HCT116 (cell line): ENCODE measurements at regions of chr12 and their contacts with region 1.

Region 1: GRCh38 chr12:85273381-85274314 is 6.4 kb upstream of the ALX1 start:
- DNase-seq: no peak
- ATAC-seq: no peak
- H3K4me3 ChIP-seq: no peak overlapping the region
- H3K27ac ChIP-seq: no peak overlapping the region
- H3K4me1 ChIP-seq: no peaks in the 10 kb centered on the region
- H3K27me3 ChIP-seq: no peaks in the 10 kb centered on the region
- CTCF ChIP-seq: no peak
- POLR2A ChIP-seq: no peak
- RAD21 ChIP-seq: no peak

Region 2: GRCh38 chr12:85225501-85225900 is 48.1 kb before region 1 on chr12:
- CTCF ChIA-PET with region 1: no interaction called
- POLR2A ChIA-PET with region 1: no interaction called
- RAD21 ChIA-PET with region 1: no interaction called
- intact Hi-C with region 1: no loop called
- DNase-seq: no peak
- ATAC-seq: no peak
- H3K4me3 ChIP-seq: no peak overlapping the region
- H3K27ac ChIP-seq: no peak overlapping the region
- H3K4me1 ChIP-seq: no peaks in the 10 kb centered on the region
- H3K27me3 ChIP-seq: no peaks in the 10 kb centered on the region
- CTCF ChIP-seq: no peak
- POLR2A ChIP-seq: no peak
- RAD21 ChIP-seq: no peak

Region 3: GRCh38 chr12:85253823-85254222 is 19.8 kb before region 1 on chr12:
- CTCF ChIA-PET with region 1: no interaction called
- POLR2A ChIA-PET with region 1: no interaction called
- RAD21 ChIA-PET with region 1: no interaction called
- intact Hi-C with region 1: loop called (anchors 1 kb)
- DNase-seq: no peak
- ATAC-seq: no peak
- H3K4me3 ChIP-seq: no peak overlapping the region
- H3K27ac ChIP-seq: no peak overlapping the region
- H3K4me1 ChIP-seq: no peaks in the 10 kb centered on the region
- H3K27me3 ChIP-seq: no peaks in the 10 kb centered on the region
- CTCF ChIP-seq: no peak
- POLR2A ChIP-seq: no peak
- RAD21 ChIP-seq: no peak

Region 4: DNA sequence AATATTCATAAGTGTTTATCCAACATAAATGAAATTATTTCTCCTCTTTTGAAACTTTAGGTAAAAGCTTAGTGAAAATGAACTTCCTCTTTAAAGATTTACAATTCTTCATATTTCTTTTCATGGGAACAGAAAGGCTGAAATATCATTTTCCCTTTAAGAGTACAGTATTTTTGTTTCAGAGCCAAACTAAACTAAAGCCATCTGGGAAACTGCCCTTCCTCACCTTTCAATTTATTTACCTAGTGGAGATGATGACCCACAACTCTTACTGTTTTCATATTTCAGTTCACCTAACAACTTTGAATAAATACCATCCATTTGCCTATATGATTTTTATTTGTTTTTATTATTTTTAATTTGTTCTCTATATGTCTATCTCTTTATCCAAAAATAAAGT is 111.8 kb after region 1 on chr12:
- CTCF ChIA-PET with region 1: no interaction called
- POLR2A ChIA-PET with region 1: no interaction called
- RAD21 ChIA-PET with region 1: no interaction called
- intact Hi-C with region 1: no loop called
- DNase-seq: no peak
- ATAC-seq: no peak
- H3K4me3 ChIP-seq: no peak overlapping the region
- H3K27ac ChIP-seq: no peak overlapping the region
- H3K4me1 ChIP-seq: no peaks in the 10 kb centered on the region
- H3K27me3 ChIP-seq: no peaks in the 10 kb centered on the region
- CTCF ChIP-seq: no peak
- POLR2A ChIP-seq: no peak
- RAD21 ChIP-seq: no peak